Activated naive CD4-positive, alpha-beta T cell treated with anti-CD3 and anti-CD28 coated beads, Interleukin-2, amount 10 ng/mL, durations not matched to agents 7 days and 5 days (primary cell): ENCODE measurements at regions of chr15 and their contacts with region 1.

Region 1: DNA sequence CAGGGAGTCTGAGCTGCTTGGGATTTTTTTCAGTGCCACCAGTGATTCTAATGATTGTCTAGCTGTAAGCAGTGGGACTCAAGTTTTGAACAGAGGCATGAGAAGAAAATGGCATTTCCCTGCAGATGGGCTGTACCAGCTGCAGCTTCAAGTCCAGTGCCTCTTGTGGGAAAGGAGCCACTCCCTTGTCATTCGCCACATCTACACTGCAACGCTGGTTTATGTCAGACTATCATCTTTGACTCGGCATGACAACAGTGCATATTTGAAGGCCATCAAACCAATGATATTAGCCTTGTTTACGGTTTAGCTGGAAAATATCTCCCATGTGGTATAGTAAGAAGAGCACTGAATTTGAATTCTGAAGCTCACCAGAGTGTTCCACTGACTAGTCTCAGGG is 22.2 kb downstream of the SCG5 start:
- DNase-seq: no peak
- H3K4me3 Mint-ChIP-seq: no peak overlapping the region
- H3K27ac Mint-ChIP-seq: no peak overlapping the region
- H3K4me1 Mint-ChIP-seq: no peaks in the 10 kb centered on the region
- H3K27me3 Mint-ChIP-seq: no peaks in the 10 kb centered on the region

Region 2: GRCh38 chr15:32651229-32651837 is 12.3 kb before region 1 on chr15:
- CTCF ChIA-PET with region 1: interaction called, 15 read pairs
- DNase-seq: peak; percentile 64
- H3K4me3 Mint-ChIP-seq: no peak overlapping the region
- H3K27ac Mint-ChIP-seq: no peak overlapping the region
- H3K4me1 Mint-ChIP-seq: peaks cover 9% of the 10 kb centered on the region
- H3K27me3 Mint-ChIP-seq: no peaks in the 10 kb centered on the region

Region 3: GRCh38 chr15:32994810-32995424 is 331.2 kb after region 1 on chr15:
- CTCF ChIA-PET with region 1: interaction called, 16 read pairs
- DNase-seq: no peak
- H3K4me3 Mint-ChIP-seq: no peak overlapping the region
- H3K27ac Mint-ChIP-seq: no peak overlapping the region
- H3K4me1 Mint-ChIP-seq: no peaks in the 10 kb centered on the region
- H3K27me3 Mint-ChIP-seq: no peaks in the 10 kb centered on the region